Uterus (tissue), 4 donors: ENCODE measurements at regions of chr1 and their contacts with region 1.

Region 1: GRCh38 chr1:205273551-205273982 is 45.8 kb downstream of the TMCC2 start:
- DNase-seq: peak; percentile 84 to 86
- H3K4me3 ChIP-seq: no peak overlapping the region
- H3K27ac ChIP-seq: no peak overlapping the region
- H3K4me1 ChIP-seq: no peaks in the 10 kb centered on the region
- H3K27me3 ChIP-seq: no peaks in the 10 kb centered on the region
- CTCF ChIP-seq: peak; percentile 96 to 98 (median 98)
- POLR2A ChIP-seq: no peak

Region 2: DNA sequence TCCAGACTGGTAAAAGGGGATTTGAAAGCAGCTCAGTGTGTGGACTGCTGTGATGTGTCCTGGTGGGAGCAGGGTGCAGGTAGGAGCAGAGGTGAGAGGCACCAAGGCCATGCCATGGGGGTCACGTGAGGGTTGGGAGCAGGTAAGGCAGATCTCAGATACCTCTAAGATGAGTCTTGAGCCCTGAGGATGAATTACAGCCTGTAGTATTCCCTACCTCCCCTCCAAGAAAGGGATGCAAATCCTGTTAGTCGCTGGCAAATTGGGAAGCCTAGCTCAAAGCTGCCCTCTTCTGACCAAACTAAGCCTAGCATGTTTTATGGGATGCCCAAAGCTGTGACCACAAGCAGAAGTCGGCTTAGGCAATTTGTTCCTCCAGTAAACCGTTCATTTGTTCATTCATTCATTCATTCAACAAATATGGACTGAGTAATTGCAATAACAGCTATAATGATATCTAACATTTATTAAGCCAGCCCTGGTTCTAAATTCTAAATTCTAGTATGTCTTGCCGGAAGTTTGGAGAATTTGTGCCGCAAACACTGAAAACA is 51.8 kb after region 1 on chr1:
- intact Hi-C with region 1: loop called (anchors 2 kb)
- DNase-seq: peak; percentile 62 to 64
- H3K4me3 ChIP-seq: no peak overlapping the region
- H3K27ac ChIP-seq: no peak overlapping the region
- H3K4me1 ChIP-seq: no peaks in the 10 kb centered on the region
- H3K27me3 ChIP-seq: no peaks in the 10 kb centered on the region
- CTCF ChIP-seq: peak; percentile 74 to 88 (median 78)
- POLR2A ChIP-seq: no peak